T-cell (primary cell): ENCODE measurements at regions of chr20 and their contacts with region 1.

Region 1: GRCh38 chr20:57868310-57868709 is 158.5 kb upstream of the PMEPA1 start:
- DNase-seq: peak in 1 of 35 experiments; percentile 14
- ATAC-seq: no peak
- H3K4me3 ChIP-seq: no peak overlapping the region
- H3K4me3 Mint-ChIP-seq: no peak overlapping the region
- H3K27ac ChIP-seq: no peak overlapping the region
- H3K27ac Mint-ChIP-seq: no peak overlapping the region
- H3K4me1 ChIP-seq: no peaks in the 10 kb centered on the region
- H3K4me1 Mint-ChIP-seq: peaks cover 12 to 19% (median 19%) of the 10 kb centered on the region in 3 donors
- H3K27me3 ChIP-seq: peaks cover 0 to 50% of the 10 kb centered on the region in 2 experiments
- H3K27me3 Mint-ChIP-seq: peaks cover 4 to 42% of the 10 kb centered on the region in 2 donors

Region 2: DNA sequence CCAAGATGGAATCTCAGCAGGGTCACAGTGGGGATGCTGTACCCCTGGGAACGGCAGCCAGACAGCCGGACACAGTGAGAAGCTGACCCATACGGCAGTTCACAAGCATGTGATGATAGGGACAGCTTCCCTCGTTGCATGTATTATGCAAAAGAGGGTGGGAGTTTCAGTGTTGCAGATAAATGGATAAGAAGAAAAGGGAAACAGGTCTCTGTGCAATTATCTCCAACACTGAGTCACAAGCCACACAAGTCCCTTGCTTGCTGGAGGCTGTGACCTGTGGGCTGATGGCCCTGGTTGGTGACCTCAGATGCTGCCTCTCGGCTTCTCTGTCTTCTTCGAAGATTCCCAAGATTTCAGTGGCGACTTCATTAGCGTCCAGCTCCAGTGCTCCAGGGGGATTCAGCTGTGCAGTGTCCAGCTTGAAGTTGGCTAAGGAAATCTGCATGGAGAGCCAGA is 559.5 kb before region 1 on chr20:
- CTCF ChIA-PET with region 1: no interaction called
- POLR2A ChIA-PET with region 1: interaction called in 1 of 2 experiments, 10 read pairs
- DNase-seq: no peak
- ATAC-seq: no peak
- H3K4me3 ChIP-seq: no peak overlapping the region
- H3K4me3 Mint-ChIP-seq: no peak overlapping the region
- H3K27ac ChIP-seq: no peak overlapping the region
- H3K27ac Mint-ChIP-seq: no peak overlapping the region
- H3K4me1 ChIP-seq: no peaks in the 10 kb centered on the region
- H3K4me1 Mint-ChIP-seq: no peaks in the 10 kb centered on the region
- H3K27me3 ChIP-seq: peaks cover 0 to 31% of the 10 kb centered on the region in 2 experiments
- H3K27me3 Mint-ChIP-seq: peaks cover 22 to 26% of the 10 kb centered on the region in 2 donors

Region 3: DNA sequence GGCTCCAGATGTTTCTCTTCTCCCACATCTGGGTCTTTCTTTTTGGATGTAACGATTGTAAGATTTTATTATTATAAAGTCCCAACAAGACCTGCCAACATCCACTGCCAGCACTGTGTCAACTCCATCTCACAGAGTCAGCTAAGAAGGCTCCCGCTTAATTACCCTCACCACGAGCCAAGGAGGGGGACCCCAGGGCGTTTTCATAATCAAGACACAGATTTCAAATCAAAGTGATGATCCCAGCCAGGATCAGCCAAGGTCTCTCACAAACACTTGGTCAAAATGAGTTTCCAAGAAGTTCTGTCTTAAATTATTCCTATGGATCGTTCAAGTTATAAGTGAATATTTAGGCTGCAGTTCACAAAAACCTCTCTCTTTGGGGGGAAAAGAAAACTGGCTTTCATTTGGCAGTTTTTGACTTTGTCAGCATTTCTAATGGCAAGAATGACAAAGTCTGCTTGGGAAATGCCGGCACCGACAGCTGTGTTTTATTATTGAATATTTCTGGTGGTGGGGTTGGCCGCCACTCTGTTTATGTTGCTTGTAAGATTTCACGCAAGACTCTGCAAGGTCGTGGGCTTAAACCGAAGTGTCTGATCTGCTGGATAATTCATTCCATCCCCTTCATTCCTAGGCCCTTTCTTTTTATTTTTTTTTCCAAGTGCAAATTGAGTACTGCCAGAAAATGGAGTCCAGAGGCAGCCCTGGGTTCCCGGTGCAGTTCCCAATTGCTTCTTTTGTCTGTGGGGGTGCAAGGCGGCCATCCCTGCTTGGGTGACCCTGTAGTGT is 11.7 kb after region 1 on chr20:
- CTCF ChIA-PET with region 1: no interaction called
- POLR2A ChIA-PET with region 1: no interaction called
- DNase-seq: no peak
- ATAC-seq: no peak
- H3K4me3 ChIP-seq: no peak overlapping the region
- H3K4me3 Mint-ChIP-seq: no peak overlapping the region
- H3K27ac ChIP-seq: no peak overlapping the region
- H3K27ac Mint-ChIP-seq: no peak overlapping the region
- H3K4me1 ChIP-seq: no peaks in the 10 kb centered on the region
- H3K4me1 Mint-ChIP-seq: no peaks in the 10 kb centered on the region
- H3K27me3 ChIP-seq: peaks cover 0 to 6% of the 10 kb centered on the region in 2 experiments
- H3K27me3 Mint-ChIP-seq: peaks cover 4 to 8% of the 10 kb centered on the region in 2 donors